ENCODE measurements at regions of chr11 and their contacts with region 1.

Region 1: DNA sequence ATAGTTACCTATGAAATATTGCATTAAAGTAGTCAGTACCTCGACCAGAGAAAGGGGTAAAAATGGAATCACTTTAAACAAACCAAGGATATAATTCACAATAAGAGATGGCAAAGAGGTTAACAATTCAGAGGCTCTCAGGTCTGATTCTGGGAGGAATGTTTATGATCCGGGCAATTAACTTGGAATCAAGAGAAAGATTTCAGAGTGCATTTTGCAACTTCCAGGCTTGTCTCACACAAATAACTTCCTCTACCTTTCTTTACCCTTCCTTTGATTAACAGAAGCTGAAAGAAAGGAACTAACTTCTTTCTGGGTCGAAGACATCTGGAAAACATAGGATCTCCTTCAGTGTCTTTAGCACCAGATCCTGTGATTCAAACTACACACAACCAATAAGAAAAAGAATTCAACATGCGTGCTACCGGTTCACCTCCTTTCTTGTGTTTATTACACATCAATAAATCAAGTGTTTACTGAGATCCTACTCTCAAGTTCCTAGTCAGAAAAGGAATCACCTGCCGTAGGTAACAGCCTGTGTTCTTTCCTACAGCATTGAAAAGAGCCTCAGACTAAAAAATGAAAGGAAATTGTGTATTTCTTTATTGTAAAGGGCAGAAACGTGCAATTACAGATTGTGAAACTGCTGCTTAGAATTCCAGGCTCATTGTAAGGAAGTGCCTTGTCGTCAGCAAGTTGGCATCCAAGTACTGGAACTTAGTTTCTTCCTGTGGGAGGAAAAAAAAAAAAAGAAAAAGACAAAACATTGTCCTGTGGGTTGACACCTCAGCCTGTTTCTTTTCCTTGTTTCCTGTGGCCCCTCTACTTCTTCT is 29.5 kb downstream of the CARD18 start:
- DNase-seq: no peak
- H3K4me3 Mint-ChIP-seq: no peak overlapping the region
- H3K27ac Mint-ChIP-seq: no peak overlapping the region
- H3K4me1 Mint-ChIP-seq: peaks cover 29% of the 10 kb centered on the region
- H3K27me3 Mint-ChIP-seq: peaks cover 5% of the 10 kb centered on the region

Region 2: GRCh38 chr11:105044921-105045524 is 65.0 kb before region 1 on chr11 and contains the start of gene CARD16:
- CTCF ChIA-PET with region 1: no interaction called
- POLR2A ChIA-PET with region 1: no interaction called
- intact Hi-C with region 1: loop called (anchors 1 kb)
- DNase-seq: peak; percentile 55
- H3K4me3 Mint-ChIP-seq: peak within 1 kb of the TSS; percentile 77
- H3K27ac Mint-ChIP-seq: peak within 1 kb of the TSS; percentile 71
- H3K4me1 Mint-ChIP-seq: peaks cover 55% of the 10 kb centered on the region
- H3K27me3 Mint-ChIP-seq: no peaks in the 10 kb centered on the region
- total RNA-seq, gene CARD16: 8.6 to 10.5 TPM

Region 3: GRCh38 chr11:105297463-105297862 is 187.4 kb after region 1 on chr11:
- CTCF ChIA-PET with region 1: no interaction called
- POLR2A ChIA-PET with region 1: no interaction called
- intact Hi-C with region 1: loop called (anchors 5 kb)
- DNase-seq: no peak
- H3K4me3 Mint-ChIP-seq: no peak overlapping the region
- H3K27ac Mint-ChIP-seq: peak overlapping the region; percentile 58
- H3K4me1 Mint-ChIP-seq: peaks cover 24% of the 10 kb centered on the region
- H3K27me3 Mint-ChIP-seq: peaks cover 3% of the 10 kb centered on the region

Measured in activated CD4-positive, alpha-beta memory T cell treated with anti-CD3 and anti-CD28 coated beads for 36 hours (primary cell).